ENCODE measurements at regions of chr20 and their contacts with region 1.

Region 1: GRCh38 chr20:50165684-50166554 is 12.4 kb upstream of the PEDS1 start:
- DNase-seq: peak; percentile 94 to 97 (median 96)
- ATAC-seq: peak; percentile 97
- H3K4me3 ChIP-seq: peak overlapping the region in 1 of 2 donors; percentile 26
- H3K27ac ChIP-seq: peak overlapping the region; percentile 84 to 85
- H3K4me1 ChIP-seq: peaks cover 7 to 41% of the 10 kb centered on the region in 2 donors
- H3K27me3 ChIP-seq: no peaks in the 10 kb centered on the region
- CTCF ChIP-seq: no peak

Region 2: DNA sequence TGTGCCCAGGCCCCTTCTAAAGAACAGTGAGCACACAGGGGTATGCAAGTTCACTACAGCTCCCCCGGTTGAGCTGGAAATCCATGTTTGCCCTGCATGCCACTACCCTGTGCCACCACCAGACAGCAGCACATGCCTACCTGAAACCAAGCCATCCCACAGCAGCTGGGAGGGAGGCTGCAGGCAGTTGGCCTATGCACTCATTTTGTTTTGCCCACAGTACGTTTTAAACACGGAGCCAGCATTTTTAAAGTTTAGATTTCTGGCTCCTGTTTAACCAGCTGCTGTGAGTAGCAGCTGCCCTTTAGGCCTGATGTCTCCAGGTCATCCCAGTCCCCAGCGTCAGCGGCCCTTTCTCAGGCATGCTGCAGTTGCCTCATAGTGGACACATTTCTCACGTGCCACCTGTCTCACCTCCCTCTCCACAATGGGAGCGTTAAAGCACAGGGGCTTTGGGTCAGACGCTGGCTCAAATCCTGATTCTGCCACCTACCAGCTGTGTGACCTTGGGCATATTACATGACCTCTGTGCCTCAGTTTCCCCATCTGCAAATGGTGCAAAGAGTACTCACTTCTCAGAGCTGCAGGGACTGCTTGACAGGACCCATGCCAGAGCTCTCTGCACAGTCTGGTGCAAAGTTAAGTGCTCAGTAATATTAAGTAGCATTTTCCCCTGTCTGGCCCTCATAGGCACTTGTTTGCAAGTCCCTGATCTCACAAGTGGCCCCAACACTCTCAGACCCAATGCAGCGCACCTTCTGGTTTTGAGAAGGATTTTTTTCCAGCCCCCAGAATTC is 44.8 kb before region 1 on chr20:
- intact Hi-C with region 1: loop called in 1 of 2 experiments (anchors 5 kb)
- DNase-seq: peak in 2 of 4 donors; percentile 48 to 56
- ATAC-seq: peak; percentile 88
- H3K4me3 ChIP-seq: no peak overlapping the region
- H3K27ac ChIP-seq: peak overlapping the region in 1 of 2 donors; percentile 18
- H3K4me1 ChIP-seq: peaks cover 3 to 19% of the 10 kb centered on the region in 2 donors
- H3K27me3 ChIP-seq: no peaks in the 10 kb centered on the region
- CTCF ChIP-seq: peak; percentile 59 to 80

Region 3: DNA sequence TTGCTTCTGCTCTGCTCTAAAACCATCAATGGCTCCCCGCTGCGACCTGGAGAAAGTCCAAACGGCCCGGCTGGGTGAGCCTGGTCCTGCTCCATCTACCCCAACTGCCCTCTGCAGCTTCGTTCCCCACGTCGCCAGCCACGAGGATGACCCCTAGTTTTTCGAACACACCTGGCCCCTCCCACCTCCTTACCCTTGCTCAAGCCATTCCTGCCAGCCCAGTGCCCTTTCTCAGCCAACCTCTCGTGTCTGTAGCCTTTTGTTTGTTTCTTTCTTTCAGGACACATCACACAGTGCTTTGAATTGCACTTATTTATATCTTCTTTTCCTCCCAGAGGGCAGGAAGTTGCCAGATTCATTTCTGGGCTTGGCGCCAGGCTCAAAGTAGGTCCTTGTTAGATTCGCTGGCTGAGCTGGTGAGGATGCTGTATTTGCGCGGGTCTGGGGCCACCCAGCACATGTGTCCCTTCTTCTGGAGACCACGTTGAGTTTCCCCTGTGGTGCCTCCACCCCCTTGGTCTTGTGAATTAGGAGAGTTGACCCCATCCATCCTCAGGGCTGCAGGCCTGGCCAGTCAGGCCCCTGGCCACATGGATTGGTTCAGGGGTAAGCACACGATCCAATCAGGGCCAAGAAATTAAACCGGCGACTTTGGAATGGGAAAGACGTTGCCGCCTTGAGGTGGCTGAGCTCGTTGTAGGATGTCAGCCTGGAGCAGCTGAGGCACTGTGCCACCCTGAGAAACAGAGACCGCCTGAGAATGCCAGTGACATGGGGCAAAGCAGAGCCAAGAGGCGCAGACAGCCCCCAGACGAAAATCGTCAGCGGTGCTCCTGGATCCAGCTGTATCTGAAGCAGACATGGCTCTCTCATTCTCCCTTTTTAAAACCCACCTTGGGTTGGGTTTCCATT is 180.7 kb after region 1 on chr20:
- intact Hi-C with region 1: no loop called
- DNase-seq: peak; percentile 79 to 91 (median 85)
- ATAC-seq: peak; percentile 68
- H3K4me3 ChIP-seq: peak overlapping the region in 1 of 2 donors; percentile 26
- H3K27ac ChIP-seq: peak overlapping the region; percentile 58 to 91
- H3K4me1 ChIP-seq: peaks cover 17 to 84% of the 10 kb centered on the region in 2 donors
- H3K27me3 ChIP-seq: no peaks in the 10 kb centered on the region
- CTCF ChIP-seq: no peak